ENCODE measurements at regions of chr2 and their contacts with region 1.

Region 1: GRCh38 chr2:118371515-118371914 is 283.2 kb downstream of the INSIG2 start:
- DNase-seq: peak; percentile 32
- H3K4me3 ChIP-seq: no peak overlapping the region
- H3K27ac ChIP-seq: no peak overlapping the region
- H3K4me1 ChIP-seq: no peaks in the 10 kb centered on the region
- H3K27me3 ChIP-seq: no peaks in the 10 kb centered on the region
- CTCF ChIP-seq: peak; percentile 96 to 98

Region 2: DNA sequence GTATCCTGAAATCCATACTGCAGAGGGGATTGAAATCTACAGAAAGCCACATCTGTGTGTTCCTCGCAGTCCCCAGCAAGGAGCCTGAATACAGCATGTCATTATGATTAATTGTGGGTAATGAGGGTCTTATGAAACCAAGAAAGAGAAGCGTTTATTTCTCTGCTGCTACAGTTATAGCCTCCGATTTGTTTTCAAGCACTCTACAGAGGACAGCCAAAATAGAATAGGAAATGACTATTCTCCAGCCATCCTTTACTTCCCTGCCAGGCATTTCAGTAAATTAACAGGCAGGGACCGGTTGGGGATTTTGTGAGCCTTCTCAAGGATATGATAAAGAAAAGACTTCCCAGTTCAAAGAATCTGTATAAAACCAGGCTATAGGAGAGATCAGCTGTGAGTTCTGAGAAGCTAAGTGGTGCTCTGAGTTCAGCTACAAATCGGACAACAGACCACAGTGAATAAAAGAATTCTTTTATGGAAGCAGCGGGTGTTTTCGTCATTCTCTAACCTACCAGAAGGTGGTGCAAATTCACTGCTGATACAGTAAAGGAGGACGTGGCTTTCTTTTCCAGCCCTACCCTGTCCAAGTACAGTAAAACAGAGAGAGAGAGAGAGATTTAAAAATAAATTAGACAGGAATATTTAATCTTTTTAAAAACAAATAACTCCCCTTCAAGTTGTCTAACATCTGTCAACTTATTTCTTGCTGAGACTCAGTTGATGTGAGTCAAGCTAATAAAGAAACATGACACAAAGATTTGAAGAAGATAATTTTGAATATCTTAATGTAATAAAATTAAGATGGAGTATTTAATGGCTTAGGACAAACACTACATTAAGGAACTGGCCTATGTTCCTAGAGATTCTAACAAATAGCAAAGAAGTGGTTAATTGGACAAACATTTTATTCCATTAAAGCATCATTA is 149.6 kb before region 1 on chr2:
- CTCF ChIA-PET with region 1: no interaction called
- dilution Hi-C with region 1: no loop called
- in situ Hi-C with region 1: no loop called
- intact Hi-C with region 1: loop called (anchors 2 kb)
- DNase-seq: peak; percentile 59
- H3K4me3 ChIP-seq: no peak overlapping the region
- H3K27ac ChIP-seq: no peak overlapping the region
- H3K4me1 ChIP-seq: peaks cover 6% of the 10 kb centered on the region
- H3K27me3 ChIP-seq: peaks cover 24% of the 10 kb centered on the region
- CTCF ChIP-seq: peak; percentile 79 to 80

Region 3: GRCh38 chr2:118502106-118502505 is 130.6 kb after region 1 on chr2:
- CTCF ChIA-PET with region 1: no interaction called
- dilution Hi-C with region 1: no loop called
- in situ Hi-C with region 1: no loop called
- intact Hi-C with region 1: loop called (anchors 1 kb)
- DNase-seq: no peak
- H3K4me3 ChIP-seq: no peak overlapping the region
- H3K27ac ChIP-seq: no peak overlapping the region
- H3K4me1 ChIP-seq: no peaks in the 10 kb centered on the region
- H3K27me3 ChIP-seq: no peaks in the 10 kb centered on the region
- CTCF ChIP-seq: no peak

Region 4: GRCh38 chr2:118554616-118555015 is 183.1 kb after region 1 on chr2:
- CTCF ChIA-PET with region 1: no interaction called
- dilution Hi-C with region 1: no loop called
- in situ Hi-C with region 1: no loop called
- intact Hi-C with region 1: loop called (anchors 2 kb)
- DNase-seq: no peak
- H3K4me3 ChIP-seq: no peak overlapping the region
- H3K27ac ChIP-seq: no peak overlapping the region
- H3K4me1 ChIP-seq: no peaks in the 10 kb centered on the region
- H3K27me3 ChIP-seq: no peaks in the 10 kb centered on the region
- CTCF ChIP-seq: peak; percentile 39 to 51

Region 5: GRCh38 chr2:118865106-118865505 is 493.6 kb after region 1 on chr2:
- CTCF ChIA-PET with region 1: no interaction called
- dilution Hi-C with region 1: no loop called
- in situ Hi-C with region 1: no loop called
- intact Hi-C with region 1: loop called (anchors 1 kb)
- DNase-seq: peak; percentile 39
- H3K4me3 ChIP-seq: no peak overlapping the region
- H3K27ac ChIP-seq: no peak overlapping the region
- H3K4me1 ChIP-seq: peaks cover 8% of the 10 kb centered on the region
- H3K27me3 ChIP-seq: no peaks in the 10 kb centered on the region
- CTCF ChIP-seq: peak; percentile 63 to 75

Measured in mammary epithelial cell (primary cell).